SK-N-SH (cell line): ENCODE measurements at regions of chr5 and their contacts with region 1.

Region 1: DNA sequence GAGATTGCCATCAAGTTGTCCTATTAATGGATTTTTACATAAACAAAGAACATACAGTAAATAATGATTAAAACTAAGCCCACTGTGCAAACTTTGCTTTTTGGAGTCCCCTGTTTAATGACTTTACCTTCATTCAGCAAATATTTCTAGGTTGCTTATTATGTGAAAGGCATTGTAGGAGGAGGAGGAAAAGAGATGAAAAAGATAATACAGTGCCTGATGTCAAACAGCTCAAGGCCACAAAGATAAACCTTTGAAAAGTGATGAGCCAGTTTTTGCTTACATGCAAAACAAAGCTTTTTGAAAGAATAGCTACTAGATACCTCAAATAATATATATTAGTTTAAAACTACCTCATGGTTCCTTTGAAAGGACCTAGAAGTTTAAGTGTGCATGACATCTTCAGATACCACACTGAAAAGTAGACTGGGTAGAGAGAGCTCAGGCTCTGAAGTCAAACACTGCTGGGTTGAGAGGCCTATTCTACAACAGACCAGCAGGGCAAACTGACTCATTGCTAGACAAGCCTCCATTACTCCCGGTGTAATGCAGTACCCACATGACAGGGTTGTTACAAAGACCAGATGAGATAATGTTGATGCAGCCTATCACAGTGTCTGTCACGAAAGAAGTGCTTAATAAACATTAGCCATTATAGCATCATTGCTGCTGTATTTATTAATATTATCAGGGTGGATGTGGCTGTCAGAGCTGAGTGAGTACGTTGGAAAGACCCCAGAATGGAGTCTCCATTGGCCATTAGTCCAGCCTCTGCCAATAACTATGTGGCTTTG is 11.8 kb downstream of the DEPDC1B start:
- DNase-seq: peak; percentile 48
- H3K4me3 ChIP-seq: no peak overlapping the region
- H3K27ac ChIP-seq: peak overlapping the region; percentile 16 to 62; a peak in 3 of 4 replicates
- H3K4me1 ChIP-seq: peaks cover 0 to 4% of the 10 kb centered on the region in 2 experiments; a peak in 2 of 4 replicates
- H3K27me3 ChIP-seq: no peaks in the 10 kb centered on the region
- CTCF ChIP-seq: peak; percentile 53
- EP300 ChIP-seq: no peak
- RAD21 ChIP-seq: no peak

Region 2: DNA sequence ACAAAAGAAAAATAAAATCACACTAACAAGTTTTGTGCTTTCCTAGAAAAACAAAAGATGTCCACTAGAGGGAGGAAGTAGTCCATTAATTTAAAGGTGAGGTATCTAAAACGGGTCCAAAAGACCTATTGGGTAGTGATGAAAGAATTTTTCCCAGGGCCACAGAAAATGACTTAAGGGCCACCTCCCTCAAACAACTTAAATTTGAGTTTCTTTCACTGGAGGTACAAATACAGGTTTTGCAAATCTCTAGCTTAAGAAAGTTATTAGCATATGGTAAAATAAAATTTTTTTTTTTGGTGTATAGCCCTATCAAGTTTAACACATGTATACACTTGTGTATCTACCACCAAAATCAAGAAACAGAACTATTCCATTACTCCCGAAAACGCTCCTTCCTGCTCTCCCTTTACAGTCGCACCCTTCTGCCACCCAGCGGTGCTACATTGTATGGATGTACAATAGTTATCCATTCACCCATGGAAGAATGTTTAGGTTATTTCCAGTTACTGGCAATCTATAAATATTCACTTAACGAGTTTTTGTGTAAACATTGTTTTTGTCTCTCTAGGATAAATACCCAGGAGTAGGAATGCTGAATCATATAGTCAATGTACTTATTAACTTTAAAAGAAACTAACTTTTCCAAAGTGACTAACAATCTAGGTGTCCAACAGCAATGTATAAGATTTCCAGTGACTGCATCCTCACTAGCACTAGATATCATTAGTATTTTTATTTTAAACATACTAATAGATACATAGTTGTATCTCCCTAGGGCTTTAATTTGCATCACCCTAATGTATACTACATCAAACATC is 10.1 kb before region 1 on chr5:
- CTCF ChIA-PET with region 1: interaction called, 12 read pairs
- POLR2A ChIA-PET with region 1: no interaction called
- DNase-seq: peak; percentile 41
- H3K4me3 ChIP-seq: no peak overlapping the region; a peak in 1 of 4 replicates
- H3K27ac ChIP-seq: no peak overlapping the region
- H3K4me1 ChIP-seq: no peaks in the 10 kb centered on the region; a peak in 1 of 4 replicates
- H3K27me3 ChIP-seq: no peaks in the 10 kb centered on the region
- CTCF ChIP-seq: peak; percentile 76
- EP300 ChIP-seq: no peak
- RAD21 ChIP-seq: peak; percentile 73

Region 3: DNA sequence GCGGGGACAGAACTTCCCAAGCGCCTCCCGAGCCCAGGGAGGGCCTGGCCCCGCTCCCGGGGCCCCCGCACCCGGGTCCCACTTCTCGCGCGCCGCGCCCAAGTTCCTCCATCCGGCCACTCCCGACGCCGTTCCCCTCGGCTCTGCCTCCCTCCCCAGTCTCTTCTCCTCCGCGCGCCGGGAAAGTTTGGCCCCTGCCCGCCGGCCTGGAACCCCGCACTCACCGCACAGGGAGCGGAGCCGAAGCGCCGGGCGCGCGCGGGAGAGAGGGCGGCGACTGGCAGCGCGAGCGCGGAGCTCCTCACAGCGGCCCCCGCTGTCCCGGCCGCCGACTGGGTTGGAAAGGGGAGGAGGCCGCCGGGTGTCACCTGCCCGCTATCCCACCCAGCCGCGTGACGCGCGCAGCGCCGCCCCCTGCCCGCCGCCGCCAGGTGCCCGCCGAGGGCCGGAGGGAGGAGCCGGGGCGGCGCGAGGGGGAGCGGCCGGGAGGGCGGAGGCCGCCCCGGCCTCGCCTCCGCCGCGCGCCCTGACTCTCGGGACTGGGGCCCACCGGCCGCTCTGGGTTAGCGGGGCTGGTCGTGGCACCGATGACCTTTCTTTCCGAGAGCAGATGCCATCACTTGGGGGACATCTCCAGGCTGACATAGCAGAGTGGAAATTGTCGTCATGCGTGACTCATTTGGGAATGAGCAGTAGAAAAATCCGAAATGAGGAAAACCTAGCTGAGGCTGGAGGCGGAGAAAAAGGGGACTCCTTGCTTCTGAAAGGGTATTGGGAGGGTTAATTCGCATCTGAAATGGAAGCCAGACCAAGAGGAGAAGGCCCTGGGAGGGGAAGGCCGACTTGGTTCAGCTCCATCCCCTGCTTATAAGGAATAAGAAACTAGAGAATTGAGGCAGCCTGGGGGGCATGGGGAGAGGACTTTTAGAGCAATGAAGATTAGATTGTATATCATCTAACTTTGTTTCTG is 156.1 kb after region 1 on chr5 and contains the start of gene ELOVL7:
- CTCF ChIA-PET with region 1: no interaction called
- POLR2A ChIA-PET with region 1: no interaction called
- DNase-seq: peak; percentile 87
- H3K4me3 ChIP-seq: peak within 1 kb of the TSS; percentile 68 to 71
- H3K27ac ChIP-seq: no peak within 1 kb of the TSS
- H3K4me1 ChIP-seq: peaks cover 0 to 8% of the 10 kb centered on the region in 2 experiments; a peak in 1 of 4 replicates
- H3K27me3 ChIP-seq: peaks cover 33% of the 10 kb centered on the region; the same call in 1 of the 2 replicates
- CTCF ChIP-seq: 0 out of 2 replicates have a peak, but pooled peaks have one; percentile 24
- EP300 ChIP-seq: no peak
- RAD21 ChIP-seq: no peak
- polyA plus RNA-seq, gene ELOVL7: 0.05 and 0.07 TPM in 2 replicates

Region 4: DNA sequence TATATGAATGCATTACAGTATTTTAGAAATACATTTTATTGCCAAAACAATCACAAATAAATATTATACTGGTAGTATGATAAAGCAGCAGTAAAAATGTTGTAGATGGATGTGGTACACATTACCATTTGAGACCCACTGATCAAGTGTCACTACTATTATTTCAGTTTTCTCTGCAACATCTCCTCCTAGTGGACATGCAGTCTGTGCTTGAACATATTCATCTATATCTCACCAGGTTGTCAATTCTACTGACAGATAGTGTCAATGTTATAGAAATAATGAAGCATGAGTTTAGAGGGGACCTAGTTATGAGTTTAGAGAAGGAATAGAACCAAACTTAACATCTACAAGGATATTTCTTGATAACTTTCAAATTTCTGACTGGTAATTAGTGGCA is 195.1 kb after region 1 on chr5:
- CTCF ChIA-PET with region 1: no interaction called
- POLR2A ChIA-PET with region 1: no interaction called
- DNase-seq: peak; percentile 22
- H3K4me3 ChIP-seq: no peak overlapping the region
- H3K27ac ChIP-seq: no peak overlapping the region; a peak in 1 of 4 replicates
- H3K4me1 ChIP-seq: no peaks in the 10 kb centered on the region
- H3K27me3 ChIP-seq: no peaks in the 10 kb centered on the region
- CTCF ChIP-seq: peak; percentile 48
- EP300 ChIP-seq: no peak
- RAD21 ChIP-seq: peak; percentile 46

Region 5: DNA sequence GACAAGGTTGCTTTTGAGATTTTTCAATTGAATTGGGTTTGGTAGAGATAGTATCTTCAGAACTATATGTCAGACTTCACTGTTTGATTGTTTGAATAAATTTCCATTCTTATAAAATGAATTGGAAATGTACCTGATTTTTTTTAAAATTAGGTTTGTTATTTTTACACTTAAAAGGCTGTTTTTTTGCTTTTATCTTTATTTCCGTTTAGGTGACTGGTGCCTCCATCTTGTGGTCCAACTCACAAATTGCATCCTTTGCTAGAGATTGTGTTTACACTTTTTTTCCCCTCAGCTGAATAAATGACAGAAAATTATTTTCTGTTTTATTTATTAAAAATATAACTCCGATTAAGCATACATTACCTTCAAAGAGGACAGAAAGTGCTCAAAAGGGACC is 272.5 kb after region 1 on chr5:
- CTCF ChIA-PET with region 1: no interaction called
- POLR2A ChIA-PET with region 1: no interaction called
- DNase-seq: peak; percentile 23
- H3K4me3 ChIP-seq: no peak overlapping the region
- H3K27ac ChIP-seq: no peak overlapping the region
- H3K4me1 ChIP-seq: peaks cover 6 to 7% of the 10 kb centered on the region in 2 experiments; a peak in 3 of 4 replicates
- H3K27me3 ChIP-seq: no peaks in the 10 kb centered on the region
- CTCF ChIP-seq: peak; percentile 67
- EP300 ChIP-seq: no peak
- RAD21 ChIP-seq: peak; percentile 54

Region 6: GRCh38 chr5:61586096-61587084 is 898.3 kb after region 1 on chr5:
- CTCF ChIA-PET with region 1: no interaction called
- POLR2A ChIA-PET with region 1: no interaction called
- DNase-seq: peak; percentile 21
- H3K4me3 ChIP-seq: no peak overlapping the region
- H3K27ac ChIP-seq: peak overlapping the region in 1 of 2 experiments; percentile 36; a peak in 2 of 4 replicates
- H3K4me1 ChIP-seq: peaks cover 0 to 21% of the 10 kb centered on the region in 2 experiments; a peak in 1 of 4 replicates
- H3K27me3 ChIP-seq: no peaks in the 10 kb centered on the region
- CTCF ChIP-seq: no peak
- EP300 ChIP-seq: 0 out of 4 replicates have a peak, but pooled peaks of 1 of the 2 experiments have one; percentile 36
- RAD21 ChIP-seq: no peak